ENCODE measurements at regions of chr6 and their contacts with region 1.

Region 1: DNA sequence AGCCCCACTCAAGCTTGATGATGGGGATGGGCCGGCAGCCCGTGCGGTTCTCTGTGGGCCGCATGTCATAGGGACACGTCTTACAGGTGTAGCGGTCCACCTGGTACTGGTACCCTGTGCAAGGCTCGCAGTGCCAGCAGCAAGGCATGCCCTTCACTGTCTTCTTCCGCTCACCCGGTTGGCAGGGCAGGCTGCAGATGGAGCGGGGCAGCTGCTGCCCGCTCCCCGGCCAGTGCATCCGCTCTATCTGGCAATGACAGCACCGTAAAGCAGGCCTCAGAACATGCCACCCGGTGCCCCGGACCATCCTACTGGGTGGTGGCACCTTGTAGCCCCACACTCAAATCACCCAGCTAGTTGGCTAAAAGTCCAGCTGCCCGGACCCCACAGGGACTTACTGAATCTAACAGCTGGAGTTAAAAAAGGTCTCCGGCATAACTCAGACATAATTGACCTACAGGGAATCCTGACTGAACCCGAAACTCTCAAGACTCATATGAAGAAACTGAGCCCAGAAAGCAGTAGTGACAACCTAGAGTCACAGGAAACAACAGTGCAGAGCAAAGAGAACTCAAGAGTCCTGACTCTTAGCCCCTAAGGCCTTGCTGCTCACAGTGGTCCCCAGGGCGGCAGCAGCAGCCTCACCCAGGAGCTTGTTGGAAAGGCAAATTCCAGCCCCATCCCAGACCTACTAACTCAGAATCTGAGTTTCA is 109.4 kb downstream of the GRM4 start:
- DNase-seq: no peak
- ATAC-seq: no peak
- H3K4me3 ChIP-seq: no peak overlapping the region
- H3K27ac ChIP-seq: no peak overlapping the region
- H3K4me1 ChIP-seq: no peaks in the 10 kb centered on the region
- H3K27me3 ChIP-seq: 0 out of 2 replicates have a peak, but pooled peaks cover 4% of the 10 kb centered on the region
- CTCF ChIP-seq: no peak
- POLR2A ChIP-seq: no peak
- RAD21 ChIP-seq: no peak

Region 2: GRCh38 chr6:33579828-33580714 is 456.4 kb before region 1 on chr6 and contains the start of gene BAK1:
- CTCF ChIA-PET with region 1: no interaction called
- POLR2A ChIA-PET with region 1: no interaction called
- RAD21 ChIA-PET with region 1: no interaction called
- intact Hi-C with region 1: loop called (anchors 10 kb)
- DNase-seq: peak; percentile 83
- ATAC-seq: peak; percentile 96
- H3K4me3 ChIP-seq: peak within 1 kb of the TSS; percentile 90 to 97
- H3K27ac ChIP-seq: peak within 1 kb of the TSS; percentile 75
- H3K4me1 ChIP-seq: peaks cover 16 to 36% of the 10 kb centered on the region in 2 experiments; a peak in 3 of 4 replicates
- H3K27me3 ChIP-seq: no peaks in the 10 kb centered on the region
- CTCF ChIP-seq: peak in 2 of 3 experiments; percentile 33 to 46; a peak in 3 of 6 replicates
- POLR2A ChIP-seq: peak; percentile 54
- RAD21 ChIP-seq: no peak
- total RNA-seq, gene BAK1: 18.9 TPM

Measured in HCT116 (cell line).